Activated CD4-positive, alpha-beta memory T cell treated with anti-CD3 and anti-CD28 coated beads, Interleukin-2, amount 10 ng/mL, durations not matched to agents 7 days and 5 days (primary cell): ENCODE measurements at regions of chr6 and their contacts with region 1.

Region 1: DNA sequence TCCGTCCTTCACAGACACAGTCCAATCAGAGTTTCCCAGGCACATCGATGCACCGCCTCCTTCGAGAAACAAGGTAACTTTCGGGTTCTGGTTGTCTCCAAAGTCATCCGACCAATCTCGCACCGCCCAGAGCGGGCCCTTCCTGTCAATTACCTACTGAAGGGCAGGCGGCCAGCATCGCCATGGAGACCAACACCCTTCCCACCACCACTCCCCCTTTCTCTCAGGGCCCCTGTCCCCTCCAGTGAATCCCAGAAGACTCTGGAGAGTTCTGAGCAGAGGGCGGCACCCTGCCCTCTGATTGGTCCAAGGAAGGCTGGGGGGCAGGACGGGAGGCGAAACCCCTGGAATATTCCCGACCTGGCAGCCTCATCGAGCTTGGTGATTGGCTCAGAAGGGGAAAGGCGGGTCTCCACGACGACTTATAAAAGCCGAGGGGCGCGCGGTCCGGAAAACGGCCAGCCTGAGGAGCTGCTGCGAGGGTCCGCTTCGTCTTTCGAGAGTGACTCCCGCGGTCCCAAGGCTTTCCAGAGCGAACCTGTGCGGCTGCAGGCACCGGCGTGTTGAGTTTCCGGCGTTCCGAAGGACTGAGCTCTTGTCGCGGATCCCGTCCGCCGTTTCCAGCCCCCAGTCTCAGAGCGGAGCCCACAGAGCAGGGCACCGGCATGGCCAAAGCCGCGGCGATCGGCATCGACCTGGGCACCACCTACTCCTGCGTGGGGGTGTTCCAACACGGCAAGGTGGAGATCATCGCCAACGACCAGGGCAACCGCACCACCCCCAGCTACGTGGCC is at the start of gene HSPA1B:
- DNase-seq: peak; percentile 97
- H3K4me3 Mint-ChIP-seq: peak within 1 kb of the TSS; percentile 86
- H3K27ac Mint-ChIP-seq: peak within 1 kb of the TSS; percentile 96
- H3K4me1 Mint-ChIP-seq: peaks cover 54% of the 10 kb centered on the region
- H3K27me3 Mint-ChIP-seq: no peaks in the 10 kb centered on the region
- total RNA-seq, gene HSPA1B: 60.6 to 62.6 TPM

Region 2: DNA sequence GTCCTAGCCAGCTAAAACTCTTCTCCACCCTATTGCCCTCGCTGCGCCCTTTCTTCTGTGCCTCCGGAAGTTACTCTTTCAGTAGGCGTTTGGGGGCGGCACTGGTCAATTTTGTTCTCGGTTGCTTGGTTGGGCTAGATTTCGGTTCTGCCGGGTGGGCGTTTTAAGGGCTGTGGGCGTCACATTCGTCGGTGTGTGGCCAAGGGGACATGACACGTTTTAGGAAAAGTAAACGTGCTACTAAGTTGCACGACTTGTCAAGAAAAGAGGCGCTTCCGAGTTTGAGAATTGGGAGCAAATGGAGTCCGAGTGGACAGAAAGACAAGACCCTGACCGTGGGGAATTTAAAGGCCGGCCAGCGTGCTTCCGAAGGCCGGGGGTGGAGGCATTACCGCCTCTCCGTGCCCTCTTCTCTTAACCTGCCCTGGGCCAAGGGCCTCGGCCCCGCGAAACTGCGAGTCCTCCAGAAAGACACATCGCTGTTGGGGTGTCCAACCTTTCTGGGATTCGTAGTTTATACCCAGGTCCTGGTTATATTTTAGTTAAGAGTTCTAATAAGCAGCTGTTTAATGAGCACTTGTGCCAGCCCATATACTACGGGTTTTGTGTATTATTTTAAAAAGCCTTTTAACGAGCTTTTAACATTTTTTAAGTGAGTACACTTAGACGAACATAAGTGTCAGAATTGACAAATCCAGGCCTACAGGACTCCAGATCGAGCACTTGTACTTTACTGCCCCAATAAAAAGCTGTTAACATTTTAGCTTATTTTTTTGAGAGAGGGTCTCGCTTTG is 174.4 kb before region 1 on chr6:
- CTCF ChIA-PET with region 1: interaction called, 7 read pairs
- POLR2A ChIA-PET with region 1: interaction called, 18 read pairs
- DNase-seq: no peak
- H3K4me3 Mint-ChIP-seq: peak overlapping the region; percentile 97
- H3K27ac Mint-ChIP-seq: peak overlapping the region; percentile 98
- H3K4me1 Mint-ChIP-seq: peaks cover 66% of the 10 kb centered on the region
- H3K27me3 Mint-ChIP-seq: no peaks in the 10 kb centered on the region

Region 3: DNA sequence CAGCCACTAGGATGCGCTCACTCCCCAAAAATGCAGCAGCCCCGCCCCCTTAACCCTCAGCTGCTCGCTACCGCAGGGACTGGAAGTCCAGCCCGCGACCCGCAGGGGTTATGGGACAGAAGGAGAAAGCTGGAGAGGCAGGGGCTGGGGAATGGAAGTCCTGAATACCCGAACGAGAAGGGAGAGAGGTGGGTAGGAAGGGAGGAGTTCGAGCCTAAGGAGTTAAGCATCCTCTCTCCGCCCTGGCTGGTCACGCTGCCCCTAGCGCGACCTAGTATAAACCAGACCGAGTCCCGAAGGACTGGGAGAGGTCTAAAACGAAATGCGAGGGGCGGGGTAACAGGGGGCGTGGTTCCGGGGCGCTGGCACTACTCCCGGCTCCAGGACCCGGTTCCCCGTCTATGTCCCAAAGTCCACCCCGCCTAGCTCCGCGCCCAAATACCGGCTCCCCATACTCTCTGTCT is 97.9 kb before region 1 on chr6:
- CTCF ChIA-PET with region 1: interaction called, 61 read pairs
- POLR2A ChIA-PET with region 1: interaction called, 119 read pairs
- DNase-seq: peak; percentile 82
- H3K4me3 Mint-ChIP-seq: peak overlapping the region; percentile 88
- H3K27ac Mint-ChIP-seq: peak overlapping the region; percentile 82
- H3K4me1 Mint-ChIP-seq: peaks cover 79% of the 10 kb centered on the region
- H3K27me3 Mint-ChIP-seq: no peaks in the 10 kb centered on the region

Region 4: DNA sequence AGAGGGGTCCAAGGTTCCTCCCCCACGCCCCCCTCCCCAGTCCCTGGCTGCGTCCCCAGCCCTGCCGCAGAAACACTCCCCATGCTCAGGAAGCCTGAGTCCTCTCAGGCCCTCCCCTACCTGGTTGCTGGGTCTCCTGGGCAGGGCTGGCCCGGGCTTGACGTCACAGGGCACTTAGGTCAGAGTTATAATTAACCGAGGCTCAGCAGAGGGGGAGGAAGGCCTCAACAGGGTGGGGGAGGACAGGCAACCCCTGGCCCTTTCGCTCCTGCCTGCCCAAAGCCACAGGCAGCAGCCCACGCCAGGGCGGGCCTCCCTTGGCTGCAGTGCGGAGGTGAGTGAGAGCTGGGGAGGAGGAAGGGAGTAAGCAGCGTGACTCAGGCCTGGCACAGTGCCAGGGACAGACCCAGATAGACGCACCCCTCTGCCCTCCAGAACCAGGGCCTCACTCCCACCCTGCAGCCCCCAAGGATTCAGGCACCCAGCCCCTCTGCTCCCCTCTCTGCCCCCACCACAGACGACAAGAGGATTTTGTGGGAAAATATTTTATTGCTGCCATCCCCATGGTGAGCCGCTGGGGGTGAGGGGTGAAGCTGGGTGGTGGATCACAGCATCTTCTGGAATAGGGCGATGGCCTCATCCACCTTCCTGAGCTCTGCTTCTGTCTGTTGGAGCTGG is 50.4 kb before region 1 on chr6 and contains the start of gene VWA7:
- CTCF ChIA-PET with region 1: interaction called, 3 read pairs
- POLR2A ChIA-PET with region 1: interaction called, 10 read pairs
- DNase-seq: peak; percentile 83
- H3K4me3 Mint-ChIP-seq: peak within 1 kb of the TSS; percentile 63
- H3K27ac Mint-ChIP-seq: peak within 1 kb of the TSS; percentile 84
- H3K4me1 Mint-ChIP-seq: peaks cover 43% of the 10 kb centered on the region
- H3K27me3 Mint-ChIP-seq: no peaks in the 10 kb centered on the region
- total RNA-seq, gene VWA7: 11.0 to 12.2 TPM

Region 5: GRCh38 chr6:31806465-31807272 is 20.8 kb before region 1 on chr6 and contains the start of gene LSM2:
- CTCF ChIA-PET with region 1: interaction called, 15 read pairs
- POLR2A ChIA-PET with region 1: interaction called, 29 read pairs
- DNase-seq: peak; percentile 98
- H3K4me3 Mint-ChIP-seq: peak within 1 kb of the TSS; percentile 91
- H3K27ac Mint-ChIP-seq: peak within 1 kb of the TSS; percentile 91
- H3K4me1 Mint-ChIP-seq: peaks cover 43% of the 10 kb centered on the region
- H3K27me3 Mint-ChIP-seq: no peaks in the 10 kb centered on the region
- total RNA-seq, gene LSM2: 100 to 108 TPM

Region 6: DNA sequence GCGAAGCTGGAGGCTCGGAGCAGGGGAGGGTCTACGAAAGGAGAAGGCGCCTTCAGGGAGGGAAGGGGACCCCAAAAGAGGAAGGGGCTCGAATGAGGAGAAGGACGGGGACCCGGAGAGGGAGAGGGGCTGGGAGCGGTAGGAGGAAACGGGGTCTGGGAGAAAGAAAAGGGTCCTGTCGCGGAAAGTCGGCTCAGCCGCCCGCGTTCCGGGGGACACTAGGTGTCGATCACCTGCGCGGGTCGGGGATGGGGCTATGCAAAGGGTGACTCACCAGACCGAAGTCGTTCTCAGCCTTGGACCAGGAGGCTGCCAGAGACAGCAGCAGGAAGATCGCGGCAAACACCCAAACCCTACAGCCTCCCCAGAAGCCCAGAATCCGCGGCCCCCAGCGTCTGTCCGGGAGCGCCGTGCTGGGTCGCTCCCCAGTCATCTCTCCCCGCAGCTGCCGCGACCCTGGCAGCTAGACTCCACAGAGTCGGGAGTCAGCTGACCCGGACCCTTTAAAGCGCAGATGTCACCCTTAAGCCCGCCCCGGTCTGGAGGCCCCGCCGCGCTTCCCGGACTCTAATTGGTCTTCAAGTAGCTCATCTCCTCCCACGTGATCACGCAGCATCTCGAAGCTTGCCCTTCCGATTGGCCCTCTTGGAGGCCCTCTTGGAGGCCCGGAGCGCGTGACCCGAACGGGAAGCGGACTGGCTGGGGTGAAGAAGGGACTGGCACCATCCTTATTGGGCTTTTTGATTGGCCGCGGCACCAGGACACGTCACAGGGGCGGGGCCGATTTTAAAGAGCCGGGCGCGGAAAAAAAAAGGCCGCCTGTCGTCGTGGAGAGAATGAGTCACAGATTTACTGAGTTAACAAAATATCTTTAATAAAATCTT is 35.1 kb after region 1 on chr6 and contains the start of gene NEU1:
- CTCF ChIA-PET with region 1: interaction called, 12 read pairs
- POLR2A ChIA-PET with region 1: interaction called, 5 read pairs
- DNase-seq: peak; percentile 100
- H3K4me3 Mint-ChIP-seq: peak within 1 kb of the TSS; percentile 89
- H3K27ac Mint-ChIP-seq: peak within 1 kb of the TSS; percentile 66
- H3K4me1 Mint-ChIP-seq: peaks cover 23% of the 10 kb centered on the region
- H3K27me3 Mint-ChIP-seq: no peaks in the 10 kb centered on the region
- total RNA-seq, gene NEU1: 29.2 to 29.6 TPM